Activated CD4-positive, alpha-beta T cell treated with anti-CD3 and anti-CD28 coated beads for 36 hours (primary cell): ENCODE measurements at regions of chr7 and their contacts with region 1.

Region 1: GRCh38 chr7:117750612-117751563 is 122.4 kb downstream of the CTTNBP2 start:
- DNase-seq: no peak
- ATAC-seq: no peak
- H3K4me3 Mint-ChIP-seq: no peak overlapping the region
- H3K27ac Mint-ChIP-seq: no peak overlapping the region
- H3K4me1 Mint-ChIP-seq: no peaks in the 10 kb centered on the region
- H3K27me3 Mint-ChIP-seq: peaks cover 1% of the 10 kb centered on the region

Region 2: GRCh38 chr7:118029826-118030422 is 279.0 kb after region 1 on chr7:
- CTCF ChIA-PET with region 1: no interaction called
- POLR2A ChIA-PET with region 1: no interaction called
- intact Hi-C with region 1: no loop called
- DNase-seq: no peak
- ATAC-seq: no peak
- H3K4me3 Mint-ChIP-seq: no peak overlapping the region
- H3K27ac Mint-ChIP-seq: no peak overlapping the region
- H3K4me1 Mint-ChIP-seq: no peaks in the 10 kb centered on the region
- H3K27me3 Mint-ChIP-seq: peaks cover 5% of the 10 kb centered on the region

Region 3: DNA sequence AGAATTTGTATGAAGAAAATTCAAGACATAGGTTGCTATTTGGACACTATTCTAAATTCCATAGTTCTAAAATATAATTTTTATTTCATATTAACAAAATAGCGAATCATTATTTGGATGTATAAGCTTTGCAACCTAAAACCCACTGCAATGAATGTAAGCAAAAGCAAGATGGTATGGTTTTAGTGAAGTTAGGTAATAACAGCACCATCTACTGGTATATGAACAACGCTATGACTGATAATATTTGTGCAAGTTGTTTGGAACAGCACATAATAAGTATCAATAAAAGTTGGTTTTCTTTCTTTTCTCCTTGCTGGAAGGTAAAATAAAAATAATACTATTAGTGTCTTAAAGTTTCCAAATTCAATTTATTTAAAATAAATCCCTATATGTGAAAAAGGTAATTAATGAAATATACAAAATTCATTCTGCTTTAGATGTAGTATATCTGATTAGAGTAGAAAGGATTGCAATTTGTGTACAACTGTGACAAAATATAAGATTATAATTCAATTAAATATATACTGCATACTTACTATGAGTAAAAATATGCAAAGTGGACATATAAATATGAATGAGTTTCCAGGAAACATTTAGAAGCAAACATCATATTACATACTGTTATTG is 354.0 kb after region 1 on chr7:
- CTCF ChIA-PET with region 1: no interaction called
- POLR2A ChIA-PET with region 1: no interaction called
- intact Hi-C with region 1: loop called in 1 of 2 experiments (anchors 2 kb)
- DNase-seq: no peak
- ATAC-seq: no peak
- H3K4me3 Mint-ChIP-seq: no peak overlapping the region
- H3K27ac Mint-ChIP-seq: no peak overlapping the region
- H3K4me1 Mint-ChIP-seq: no peaks in the 10 kb centered on the region
- H3K27me3 Mint-ChIP-seq: no peaks in the 10 kb centered on the region

Region 4: GRCh38 chr7:118195837-118196474 is 445.1 kb after region 1 on chr7:
- CTCF ChIA-PET with region 1: interaction called, 3 read pairs
- POLR2A ChIA-PET with region 1: no interaction called
- intact Hi-C with region 1: loop called in 1 of 2 experiments (anchors 1 kb)
- DNase-seq: peak; percentile 70
- ATAC-seq: peak; percentile 79
- H3K4me3 Mint-ChIP-seq: no peak overlapping the region
- H3K27ac Mint-ChIP-seq: no peak overlapping the region
- H3K4me1 Mint-ChIP-seq: no peaks in the 10 kb centered on the region
- H3K27me3 Mint-ChIP-seq: no peaks in the 10 kb centered on the region